ENCODE measurements at regions of chr17 and their contacts with region 1.

Region 1: DNA sequence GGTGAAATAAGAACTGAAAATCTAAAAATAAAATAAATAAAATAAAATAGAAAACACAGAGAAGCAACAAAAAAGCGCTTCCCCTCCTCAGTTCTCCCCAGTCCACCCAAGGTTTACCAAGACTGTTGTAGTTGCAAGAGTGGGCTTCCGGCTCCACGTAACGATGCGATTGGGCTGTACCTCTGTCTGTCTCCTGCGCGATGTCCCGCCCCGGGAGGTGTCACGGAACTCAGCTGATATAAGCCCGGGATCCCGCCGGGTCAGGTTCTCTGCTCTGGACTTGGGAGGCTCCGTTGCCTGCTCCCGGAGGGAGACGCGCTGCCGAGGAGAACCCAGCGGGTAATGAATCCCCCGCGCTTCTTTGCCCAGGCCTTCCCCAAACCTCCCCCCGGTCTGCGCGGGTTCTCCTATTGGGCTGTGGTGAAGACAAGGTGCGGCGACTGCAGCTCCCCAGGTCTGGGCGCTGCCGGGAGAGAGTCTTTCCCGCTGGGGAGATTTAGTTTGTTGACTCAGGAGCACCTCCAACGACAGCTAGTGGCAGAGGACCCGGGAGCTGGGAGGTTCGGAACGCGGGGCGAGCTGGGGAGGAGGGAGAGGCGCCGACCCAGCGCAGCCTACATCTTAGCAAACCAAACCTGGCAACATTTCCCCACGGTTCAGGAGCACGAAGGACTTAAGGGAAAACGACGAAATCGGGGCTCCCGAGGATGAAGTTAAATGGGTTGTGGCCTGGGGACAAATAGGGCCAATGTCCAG is at the start of gene SLFN5:
- DNase-seq: peak; percentile 98
- H3K4me3 Mint-ChIP-seq: peak within 1 kb of the TSS; percentile 93
- H3K27ac Mint-ChIP-seq: peak within 1 kb of the TSS; percentile 95
- H3K4me1 Mint-ChIP-seq: peaks cover 71% of the 10 kb centered on the region
- H3K27me3 Mint-ChIP-seq: no peaks in the 10 kb centered on the region
- total RNA-seq, gene SLFN5: 6.9 and 8.9 TPM in 2 replicates

Region 2: GRCh38 chr17:35046740-35047283 is 196.2 kb before region 1 on chr17:
- intact Hi-C with region 1: loop called (anchors 5 kb)
- DNase-seq: peak; percentile 91
- H3K4me3 Mint-ChIP-seq: peak overlapping the region; percentile 63
- H3K27ac Mint-ChIP-seq: peak overlapping the region; percentile 94
- H3K4me1 Mint-ChIP-seq: peaks cover 41% of the 10 kb centered on the region
- H3K27me3 Mint-ChIP-seq: no peaks in the 10 kb centered on the region

Region 3: GRCh38 chr17:35214631-35215273 is 28.2 kb before region 1 on chr17:
- intact Hi-C with region 1: loop called (anchors 1 kb)
- DNase-seq: peak; percentile 82
- H3K4me3 Mint-ChIP-seq: peak overlapping the region; percentile 80
- H3K27ac Mint-ChIP-seq: peak overlapping the region; percentile 90
- H3K4me1 Mint-ChIP-seq: peaks cover 78% of the 10 kb centered on the region
- H3K27me3 Mint-ChIP-seq: no peaks in the 10 kb centered on the region

Region 4: DNA sequence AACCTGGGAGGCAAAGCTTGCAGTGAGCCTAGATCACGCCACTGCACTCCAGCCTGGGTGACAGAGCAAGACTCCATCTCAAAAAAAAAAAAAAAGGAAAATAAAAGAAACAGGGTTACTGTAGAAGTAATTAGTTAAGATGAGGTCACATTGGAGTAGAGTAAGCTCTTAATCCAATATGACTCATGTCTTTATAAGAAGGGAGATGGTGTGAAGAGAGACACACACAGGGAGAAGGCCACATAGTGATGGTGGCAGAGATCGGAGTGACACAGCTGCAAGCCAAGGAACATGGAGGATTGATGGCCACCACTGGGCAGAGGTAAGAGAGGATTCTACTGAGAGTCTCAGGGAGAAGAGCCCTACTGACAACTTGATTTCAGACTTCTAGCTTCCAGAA is 15.4 kb before region 1 on chr17:
- intact Hi-C with region 1: no loop called
- DNase-seq: no peak
- H3K4me3 Mint-ChIP-seq: no peak overlapping the region
- H3K27ac Mint-ChIP-seq: no peak overlapping the region
- H3K4me1 Mint-ChIP-seq: peaks cover 7% of the 10 kb centered on the region
- H3K27me3 Mint-ChIP-seq: no peaks in the 10 kb centered on the region

Region 5: DNA sequence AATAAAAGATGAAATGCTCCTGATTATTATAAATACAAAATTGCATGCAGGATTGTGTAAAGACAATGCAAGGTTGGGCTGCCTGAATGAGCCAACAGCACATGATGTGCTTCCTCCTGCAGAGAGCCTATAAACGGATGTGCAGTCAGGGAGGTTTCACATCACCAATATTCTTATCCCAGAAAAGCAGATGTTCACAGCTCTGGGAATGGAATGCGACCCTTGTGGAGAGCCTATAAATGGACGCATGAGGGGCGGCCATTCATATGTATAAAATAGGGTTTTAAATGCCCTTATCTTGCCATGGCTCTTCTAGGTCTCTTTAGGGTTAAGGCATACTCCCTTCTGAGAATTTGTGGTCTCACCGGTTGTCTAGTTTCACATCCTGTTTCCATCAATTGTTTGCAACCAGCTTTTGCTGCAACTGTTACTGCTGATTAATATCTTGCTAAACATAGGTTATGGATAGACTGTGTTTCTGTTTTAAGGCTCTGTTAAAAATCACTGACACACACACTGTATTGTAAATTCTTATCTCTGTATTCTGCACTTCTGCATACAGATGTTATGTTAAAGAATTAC is 98.5 kb after region 1 on chr17:
- intact Hi-C with region 1: no loop called
- DNase-seq: peak; percentile 84
- H3K4me3 Mint-ChIP-seq: peak overlapping the region; percentile 53
- H3K27ac Mint-ChIP-seq: peak overlapping the region; percentile 17
- H3K4me1 Mint-ChIP-seq: peaks cover 29% of the 10 kb centered on the region
- H3K27me3 Mint-ChIP-seq: peaks cover 31% of the 10 kb centered on the region

Region 6: GRCh38 chr17:35373534-35373983 is 130.6 kb after region 1 on chr17 and contains the start of gene SLFN11:
- intact Hi-C with region 1: loop called (anchors 2 kb)
- DNase-seq: peak; percentile 95
- H3K4me3 Mint-ChIP-seq: peak within 1 kb of the TSS; percentile 89
- H3K27ac Mint-ChIP-seq: peak within 1 kb of the TSS; percentile 93
- H3K4me1 Mint-ChIP-seq: peaks cover 51% of the 10 kb centered on the region
- H3K27me3 Mint-ChIP-seq: peaks cover 1% of the 10 kb centered on the region
- total RNA-seq, gene SLFN11: 72.3 and 73.6 TPM in 2 replicates

Region 7: GRCh38 chr17:35467824-35468223 is 224.8 kb after region 1 on chr17:
- intact Hi-C with region 1: no loop called
- DNase-seq: peak; percentile 82
- H3K4me3 Mint-ChIP-seq: peak overlapping the region; percentile 15
- H3K27ac Mint-ChIP-seq: peak overlapping the region; percentile 60
- H3K4me1 Mint-ChIP-seq: peaks cover 37% of the 10 kb centered on the region
- H3K27me3 Mint-ChIP-seq: no peaks in the 10 kb centered on the region

Region 8: GRCh38 chr17:35587074-35587971 is 344.3 kb after region 1 on chr17 and contains the start of gene AP2B1:
- intact Hi-C with region 1: loop called (anchors 1 kb)
- DNase-seq: peak; percentile 99
- H3K4me3 Mint-ChIP-seq: peak within 1 kb of the TSS; percentile 98
- H3K27ac Mint-ChIP-seq: peak within 1 kb of the TSS; percentile 98
- H3K4me1 Mint-ChIP-seq: peaks cover 24% of the 10 kb centered on the region
- H3K27me3 Mint-ChIP-seq: peaks cover 12% of the 10 kb centered on the region
- total RNA-seq, gene AP2B1: 164 and 172 TPM in 2 replicates